PC-3 (cell line): ENCODE measurements at regions of chr1 and their contacts with region 1.

Region 1: DNA sequence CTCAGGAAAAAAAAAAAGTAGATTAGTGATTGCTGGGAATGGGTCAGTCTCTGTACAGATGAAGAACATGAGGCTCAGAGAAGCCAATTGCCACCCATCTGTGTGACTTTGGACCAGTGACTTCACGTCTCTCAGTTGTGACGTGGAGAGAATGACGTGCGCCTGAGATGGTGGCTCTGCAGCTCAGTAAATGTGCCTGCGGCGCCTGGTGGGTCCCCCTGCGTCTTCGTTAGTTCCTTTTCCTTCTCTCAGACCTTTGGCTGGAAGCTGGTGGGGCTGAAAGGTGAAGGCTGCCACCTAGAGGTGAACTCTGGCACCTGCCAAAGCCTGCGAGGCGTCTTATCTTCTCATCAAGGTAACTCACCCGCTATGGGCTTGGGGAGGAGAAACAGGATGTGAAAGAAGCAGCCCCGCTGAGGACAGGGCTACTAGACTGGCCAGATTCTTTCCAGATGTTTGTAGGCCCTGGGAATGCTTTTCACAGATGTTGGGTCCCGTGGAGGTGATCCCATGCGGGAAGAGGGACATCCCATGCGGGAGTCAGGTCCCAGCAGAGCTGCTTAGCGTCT is 8.7 kb upstream of the E2F2 start:
- DNase-seq: peak; percentile 96
- ATAC-seq: peak; percentile 94
- H3K4me3 ChIP-seq: peak overlapping the region; percentile 49; the same call in 1 of the 2 replicates
- H3K27ac ChIP-seq: no peak overlapping the region
- H3K4me1 ChIP-seq: no peaks in the 10 kb centered on the region
- H3K27me3 ChIP-seq: no peaks in the 10 kb centered on the region
- CTCF ChIP-seq: peak; percentile 94

Region 2: DNA sequence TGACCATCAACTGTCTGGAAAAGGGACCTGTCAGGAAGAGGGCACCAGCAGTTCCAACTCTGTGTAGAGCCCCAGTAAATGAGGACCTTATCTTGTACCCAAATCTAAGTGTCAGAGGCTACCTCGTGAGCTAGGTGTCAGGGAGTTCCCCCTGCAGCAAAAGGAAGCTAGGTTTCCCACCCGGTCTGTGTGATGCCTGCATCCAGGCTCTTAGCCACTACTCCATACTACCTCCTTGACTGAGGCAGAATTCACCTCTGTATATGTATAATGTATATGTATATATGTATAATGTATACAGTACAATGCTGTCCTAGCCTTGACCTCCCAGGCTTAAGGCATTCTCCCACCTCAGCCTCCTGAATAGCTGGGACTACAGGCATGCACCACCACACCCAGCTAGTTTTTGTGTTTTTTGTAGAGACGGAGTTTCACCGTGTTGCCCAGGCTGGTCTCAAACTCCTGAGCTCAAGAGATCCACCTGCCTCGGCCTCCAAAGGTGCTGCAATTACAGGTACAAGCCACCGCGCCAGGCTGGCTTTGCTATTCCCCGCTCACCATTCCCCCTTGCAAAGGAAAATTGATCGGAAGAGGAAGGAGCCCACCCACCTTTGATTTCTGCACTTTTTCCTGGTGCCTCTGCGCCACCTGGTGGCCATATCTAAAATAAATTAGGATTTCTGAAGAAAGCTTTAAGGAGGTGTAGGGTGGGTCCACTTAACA is 355.4 kb before region 1 on chr1:
- CTCF ChIA-PET with region 1: no interaction called
- POLR2A ChIA-PET with region 1: no interaction called
- intact Hi-C with region 1: no loop called
- DNase-seq: peak; percentile 64
- ATAC-seq: peak; percentile 14; the same call in 1 of the 2 replicates
- H3K4me3 ChIP-seq: 0 out of 2 replicates have a peak overlapping the region, but pooled peaks have one; percentile 41
- H3K27ac ChIP-seq: no peak overlapping the region
- H3K4me1 ChIP-seq: peaks cover 23% of the 10 kb centered on the region
- H3K27me3 ChIP-seq: no peaks in the 10 kb centered on the region
- CTCF ChIP-seq: peak; percentile 86

Region 3: DNA sequence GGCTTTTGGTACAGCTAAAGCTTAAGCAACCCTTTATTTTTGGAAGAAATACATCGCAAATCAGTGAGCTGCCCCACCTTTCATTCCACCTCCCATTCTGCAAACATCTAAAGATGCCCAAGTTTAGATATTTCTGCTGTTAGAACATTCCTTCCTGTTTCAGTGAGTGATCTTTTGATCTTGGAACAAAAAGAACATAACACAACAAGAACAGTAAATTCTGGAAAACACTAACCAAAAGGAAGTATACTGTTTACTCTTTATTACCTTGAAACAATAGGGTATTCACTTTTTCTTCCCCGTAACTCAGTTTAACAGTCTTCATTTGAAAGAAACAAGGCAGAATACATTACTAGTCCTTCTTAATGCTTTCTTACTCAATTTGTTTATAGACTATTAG is 236.3 kb before region 1 on chr1:
- CTCF ChIA-PET with region 1: no interaction called
- POLR2A ChIA-PET with region 1: no interaction called
- intact Hi-C with region 1: no loop called
- DNase-seq: no peak
- ATAC-seq: peak; percentile 49
- H3K4me3 ChIP-seq: no peak overlapping the region
- H3K27ac ChIP-seq: no peak overlapping the region
- H3K4me1 ChIP-seq: no peaks in the 10 kb centered on the region
- H3K27me3 ChIP-seq: no peaks in the 10 kb centered on the region
- CTCF ChIP-seq: no peak

Region 4: DNA sequence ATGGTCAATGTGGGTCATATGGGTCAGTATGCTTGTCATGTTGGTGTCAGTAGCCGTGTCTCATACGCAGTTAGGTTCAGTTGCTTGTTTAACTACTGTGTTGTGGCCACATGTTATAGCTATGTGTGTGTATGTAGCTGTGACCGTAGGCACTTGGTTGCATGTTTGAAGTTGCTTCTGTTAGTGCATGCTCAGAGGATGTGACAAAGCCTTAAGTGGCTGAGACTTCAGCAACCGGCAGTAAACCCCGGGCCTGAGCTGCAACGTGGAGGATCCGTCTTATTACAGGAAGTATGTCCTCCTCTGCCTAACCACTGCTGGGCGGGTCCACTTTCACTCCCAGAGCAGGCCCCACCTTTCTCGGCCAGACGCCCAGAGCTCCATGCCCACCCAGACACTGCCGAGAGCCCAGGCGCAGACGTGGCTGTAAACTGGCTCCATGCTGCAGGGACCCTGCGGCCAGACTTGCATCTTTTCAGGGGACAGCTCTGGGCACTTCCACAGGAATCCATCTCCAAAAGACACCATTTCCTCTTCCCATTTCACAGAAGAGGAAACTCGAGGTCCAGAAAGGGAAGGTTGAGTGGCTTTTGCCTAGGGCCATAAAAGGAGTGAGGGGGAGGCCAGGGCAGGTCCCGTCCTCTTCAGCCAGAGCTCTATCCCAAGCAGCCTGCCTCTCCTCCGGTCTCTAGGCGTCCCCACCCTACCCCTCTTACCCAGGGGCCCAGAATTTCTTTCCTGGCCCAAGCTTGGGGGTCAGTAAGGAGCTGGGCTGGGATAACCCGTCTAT is 117.3 kb before region 1 on chr1:
- CTCF ChIA-PET with region 1: no interaction called
- POLR2A ChIA-PET with region 1: no interaction called
- intact Hi-C with region 1: loop called (anchors 5 kb)
- DNase-seq: peak; percentile 68
- ATAC-seq: peak; percentile 65
- H3K4me3 ChIP-seq: peak overlapping the region; percentile 19; the same call in 1 of the 2 replicates
- H3K27ac ChIP-seq: peak overlapping the region; percentile 59
- H3K4me1 ChIP-seq: peaks cover 23% of the 10 kb centered on the region
- H3K27me3 ChIP-seq: no peaks in the 10 kb centered on the region
- CTCF ChIP-seq: no peak

Region 5: GRCh38 chr1:23622284-23622683 is 82.5 kb after region 1 on chr1:
- CTCF ChIA-PET with region 1: no interaction called
- POLR2A ChIA-PET with region 1: interaction called, 11 read pairs
- intact Hi-C with region 1: no loop called
- DNase-seq: no peak
- ATAC-seq: no peak
- H3K4me3 ChIP-seq: no peak overlapping the region
- H3K27ac ChIP-seq: no peak overlapping the region
- H3K4me1 ChIP-seq: peaks cover 5% of the 10 kb centered on the region; the same call in 1 of the 2 replicates
- H3K27me3 ChIP-seq: peaks cover 6% of the 10 kb centered on the region
- CTCF ChIP-seq: no peak

Region 6: GRCh38 chr1:23691499-23692307 is 151.9 kb after region 1 on chr1 and contains the start of gene RPL11:
- CTCF ChIA-PET with region 1: interaction called, 10 read pairs
- POLR2A ChIA-PET with region 1: no interaction called
- intact Hi-C with region 1: no loop called
- DNase-seq: peak; percentile 97
- ATAC-seq: peak; percentile 99
- H3K4me3 ChIP-seq: peak within 1 kb of the TSS; percentile 95
- H3K27ac ChIP-seq: peak within 1 kb of the TSS; percentile 47
- H3K4me1 ChIP-seq: peaks cover 21% of the 10 kb centered on the region
- H3K27me3 ChIP-seq: no peaks in the 10 kb centered on the region
- CTCF ChIP-seq: peak; percentile 66
- total RNA-seq, gene RPL11: 1,031 and 1,441 TPM in 2 replicates